Sigmoid colon (tissue), 7 donors: ENCODE measurements at regions of chr16 and their contacts with region 1.

Region 1: GRCh38 chr16:66552286-66553177 is at the start of gene CKLF:
- DNase-seq: peak; percentile 93
- H3K4me3 ChIP-seq: peak within 1 kb of the TSS; percentile 47 to 64 (median 60)
- H3K27ac ChIP-seq: peak within 1 kb of the TSS; percentile 87 to 98 (median 93)
- H3K4me1 ChIP-seq: peaks cover 0 to 63% (median 43%) of the 10 kb centered on the region in 4 donors
- H3K27me3 ChIP-seq: no peaks in the 10 kb centered on the region
- CTCF ChIP-seq: no peak
- EP300 ChIP-seq: no peak
- POLR2A ChIP-seq: peak; percentile 64 to 70
- total RNA-seq, gene CKLF: 24.1 to 53.6 (median 37.3) TPM

Region 2: GRCh38 chr16:66250686-66251431 is 301.7 kb before region 1 on chr16:
- intact Hi-C with region 1: no loop called
- DNase-seq: peak; percentile 94
- H3K4me3 ChIP-seq: no peak overlapping the region
- H3K27ac ChIP-seq: peak overlapping the region; percentile 34 to 53 (median 39)
- H3K4me1 ChIP-seq: peaks cover 0 to 35% (median 24%) of the 10 kb centered on the region in 4 donors
- H3K27me3 ChIP-seq: no peaks in the 10 kb centered on the region
- CTCF ChIP-seq: no peak
- EP300 ChIP-seq: no peak
- POLR2A ChIP-seq: no peak

Region 3: GRCh38 chr16:66483689-66484481 is 68.6 kb before region 1 on chr16:
- intact Hi-C with region 1: loop called (anchors 2 kb)
- DNase-seq: peak; percentile 80
- H3K4me3 ChIP-seq: no peak overlapping the region
- H3K27ac ChIP-seq: no peak overlapping the region
- H3K4me1 ChIP-seq: peaks cover 0 to 14% (median 12%) of the 10 kb centered on the region in 4 donors
- H3K27me3 ChIP-seq: no peaks in the 10 kb centered on the region
- CTCF ChIP-seq: peak; percentile 65 to 90 (median 85)
- EP300 ChIP-seq: no peak
- POLR2A ChIP-seq: no peak

Region 4: GRCh38 chr16:66516808-66517585 is 35.5 kb before region 1 on chr16:
- intact Hi-C with region 1: loop called (anchors 1 kb)
- DNase-seq: peak; percentile 99
- H3K4me3 ChIP-seq: peak overlapping the region in 3 of 4 donors; percentile 2 to 19 (median 10)
- H3K27ac ChIP-seq: peak overlapping the region; percentile 87 to 94 (median 90)
- H3K4me1 ChIP-seq: peaks cover 0 to 58% (median 43%) of the 10 kb centered on the region in 4 donors
- H3K27me3 ChIP-seq: no peaks in the 10 kb centered on the region
- CTCF ChIP-seq: no peak
- EP300 ChIP-seq: peak in 2 of 4 donors; percentile 69 to 70
- POLR2A ChIP-seq: peak in 1 of 2 donors; percentile 24

Region 5: GRCh38 chr16:66608241-66609138 is 56.0 kb after region 1 on chr16:
- intact Hi-C with region 1: loop called (anchors 5 kb)
- DNase-seq: peak; percentile 91
- H3K4me3 ChIP-seq: no peak overlapping the region
- H3K27ac ChIP-seq: peak overlapping the region; percentile 1 to 48 (median 32)
- H3K4me1 ChIP-seq: peaks cover 0 to 33% (median 29%) of the 10 kb centered on the region in 4 donors
- H3K27me3 ChIP-seq: peaks cover 0 to 21% (median 13%) of the 10 kb centered on the region in 3 donors
- CTCF ChIP-seq: peak; percentile 58 to 84 (median 70)
- EP300 ChIP-seq: no peak
- POLR2A ChIP-seq: no peak

Region 6: GRCh38 chr16:66639091-66639885 is 86.8 kb after region 1 on chr16:
- intact Hi-C with region 1: no loop called
- DNase-seq: no peak
- H3K4me3 ChIP-seq: no peak overlapping the region
- H3K27ac ChIP-seq: no peak overlapping the region
- H3K4me1 ChIP-seq: no peaks in the 10 kb centered on the region
- H3K27me3 ChIP-seq: no peaks in the 10 kb centered on the region
- CTCF ChIP-seq: no peak
- EP300 ChIP-seq: no peak
- POLR2A ChIP-seq: no peak

Region 7: DNA sequence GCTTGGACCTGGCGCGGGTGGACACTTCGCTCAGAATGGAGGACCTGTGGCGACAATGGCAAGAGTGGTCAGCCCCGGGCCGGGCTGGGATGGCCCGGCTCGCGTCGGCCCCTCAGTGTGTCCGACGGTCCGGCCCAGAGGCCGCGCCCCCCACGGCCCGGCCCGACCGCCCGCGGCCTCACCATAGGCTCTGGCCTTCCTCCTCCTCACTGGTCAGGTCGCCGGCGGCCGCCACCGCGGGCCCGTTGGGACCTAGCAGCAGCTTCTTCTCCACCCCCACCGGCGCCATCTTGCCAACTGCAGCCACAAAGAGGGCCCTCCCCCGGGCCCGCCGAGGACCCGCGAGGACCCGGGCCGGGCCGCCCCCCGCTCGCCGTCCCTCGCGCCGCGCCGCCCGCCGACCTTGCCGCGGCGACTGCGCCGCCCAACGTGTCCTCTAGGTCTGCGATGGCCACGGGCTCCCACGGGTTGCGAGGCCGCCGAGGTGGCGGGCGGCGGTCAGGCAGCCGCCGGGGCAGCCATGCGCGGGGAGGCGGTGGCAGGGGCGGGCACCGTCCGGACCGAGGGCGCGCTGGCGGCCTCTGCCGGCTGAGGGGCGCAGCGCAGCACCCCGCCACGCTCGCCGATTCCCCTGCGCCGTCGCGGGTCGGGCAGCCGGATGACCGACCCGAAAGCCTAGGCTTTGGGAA is 198.9 kb after region 1 on chr16 and contains the start of gene DYNC1LI2:
- intact Hi-C with region 1: loop called (anchors 10 kb)
- DNase-seq: peak; percentile 88
- H3K4me3 ChIP-seq: peak within 1 kb of the TSS; percentile 78 to 96 (median 94)
- H3K27ac ChIP-seq: peak within 1 kb of the TSS; percentile 87 to 96 (median 90)
- H3K4me1 ChIP-seq: peaks cover 0 to 48% (median 43%) of the 10 kb centered on the region in 4 donors
- H3K27me3 ChIP-seq: no peaks in the 10 kb centered on the region
- CTCF ChIP-seq: peak in 1 of 4 experiments; percentile 84
- EP300 ChIP-seq: no peak
- POLR2A ChIP-seq: no peak
- total RNA-seq, gene DYNC1LI2: 164 to 327 (median 261) TPM

Region 8: DNA sequence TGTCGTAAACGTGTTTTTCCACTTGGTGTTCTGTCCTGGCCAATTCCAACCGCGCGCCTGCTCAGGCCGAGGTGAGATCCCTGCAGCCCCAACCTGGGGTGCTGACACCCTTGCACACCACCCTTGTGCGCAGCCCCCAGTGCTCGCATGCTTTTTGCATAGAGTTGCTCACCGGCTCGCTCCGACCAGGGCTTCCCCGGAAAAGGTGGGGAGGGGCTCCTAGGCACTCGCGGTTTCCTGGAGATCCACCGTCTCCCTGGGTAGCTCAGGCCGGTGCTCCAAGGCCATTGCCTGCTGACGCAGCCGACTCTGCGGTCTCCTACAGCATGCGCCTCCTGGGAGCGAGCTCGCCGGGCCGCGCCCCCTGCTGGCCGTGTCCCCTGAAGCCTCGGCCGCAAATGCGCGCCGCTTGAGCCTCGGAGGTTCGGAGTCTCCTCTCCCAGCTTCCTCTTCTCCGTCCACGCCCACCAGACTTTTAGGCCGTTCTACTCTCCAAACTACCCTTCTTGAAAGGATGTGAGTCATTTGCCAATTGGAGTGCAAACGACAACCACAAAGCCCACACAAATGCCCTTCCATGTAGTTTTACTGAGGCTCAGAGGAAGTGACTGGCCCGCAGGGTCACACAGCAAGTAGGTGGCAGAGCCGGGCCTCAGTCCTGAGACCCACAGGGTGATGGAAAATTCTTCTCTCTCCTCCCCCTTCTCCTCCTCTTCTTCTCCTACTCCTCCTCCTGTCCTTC is 320.6 kb after region 1 on chr16:
- intact Hi-C with region 1: loop called (anchors 5 kb)
- DNase-seq: peak; percentile 93
- H3K4me3 ChIP-seq: peak overlapping the region in 3 of 4 donors; percentile 23 to 35 (median 35)
- H3K27ac ChIP-seq: peak overlapping the region; percentile 3 to 52 (median 48)
- H3K4me1 ChIP-seq: peaks cover 0 to 10% (median 6%) of the 10 kb centered on the region in 4 donors
- H3K27me3 ChIP-seq: no peaks in the 10 kb centered on the region
- CTCF ChIP-seq: peak; percentile 51 to 89 (median 80)
- EP300 ChIP-seq: no peak
- POLR2A ChIP-seq: no peak